Activated CD4-positive, alpha-beta memory T cell treated with anti-CD3 and anti-CD28 coated beads, Interleukin-2, amount 10 ng/mL, durations not matched to agents 7 days and 5 days (primary cell): ENCODE measurements at regions of chr3 and their contacts with region 1.

Region 1: GRCh38 chr3:88003115-88003755 is 55.6 kb downstream of the CGGBP1 start:
- DNase-seq: no peak
- H3K4me3 Mint-ChIP-seq: no peak overlapping the region
- H3K27ac Mint-ChIP-seq: no peak overlapping the region
- H3K4me1 Mint-ChIP-seq: peaks cover 30% of the 10 kb centered on the region
- H3K27me3 Mint-ChIP-seq: peaks cover 5% of the 10 kb centered on the region

Region 2: DNA sequence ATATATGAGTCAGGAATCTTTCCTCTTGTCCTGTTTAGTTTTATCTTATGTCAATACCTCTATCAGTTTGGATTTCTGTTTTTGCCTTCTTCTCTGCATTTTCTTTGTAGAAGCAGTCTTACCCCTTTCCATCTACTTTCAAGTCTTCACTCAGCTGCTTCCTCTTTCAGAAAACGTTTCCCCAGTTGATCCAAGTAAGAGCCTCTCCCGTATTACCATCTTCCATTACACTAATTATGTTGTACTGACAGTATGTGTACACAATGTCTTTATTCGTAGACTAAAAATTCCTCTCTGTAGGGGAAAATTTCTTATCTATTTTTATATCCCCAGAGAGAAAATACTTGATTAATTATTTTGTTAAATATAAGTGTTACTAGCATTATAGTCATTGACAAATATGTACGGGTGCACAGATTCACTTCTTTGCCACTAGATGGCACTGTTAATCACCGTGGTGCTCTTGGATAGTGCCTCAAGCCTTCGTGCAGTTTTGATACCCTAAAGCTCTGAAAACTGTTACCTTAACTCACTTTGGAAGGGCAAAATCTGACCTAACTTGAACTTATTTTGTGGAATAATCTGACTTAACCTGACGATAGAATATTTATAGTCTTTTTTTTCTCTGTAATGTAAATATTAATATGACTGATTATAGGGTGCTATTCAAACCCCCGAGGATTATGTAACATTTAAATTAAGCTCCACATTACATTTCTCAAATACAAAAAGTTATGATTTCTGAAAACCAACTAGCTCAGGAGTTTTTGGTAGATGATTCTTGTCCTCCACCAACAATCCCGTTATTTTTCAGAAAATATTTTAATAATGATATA is 652.7 kb before region 1 on chr3:
- CTCF ChIA-PET with region 1: interaction called, 20 read pairs
- POLR2A ChIA-PET with region 1: no interaction called
- DNase-seq: no peak
- H3K4me3 Mint-ChIP-seq: no peak overlapping the region
- H3K27ac Mint-ChIP-seq: no peak overlapping the region
- H3K4me1 Mint-ChIP-seq: no peaks in the 10 kb centered on the region
- H3K27me3 Mint-ChIP-seq: peaks cover 2% of the 10 kb centered on the region

Region 3: GRCh38 chr3:87771341-87772192 is 231.7 kb before region 1 on chr3:
- CTCF ChIA-PET with region 1: interaction called, 21 read pairs
- POLR2A ChIA-PET with region 1: no interaction called
- DNase-seq: peak; percentile 47
- H3K4me3 Mint-ChIP-seq: no peak overlapping the region
- H3K27ac Mint-ChIP-seq: no peak overlapping the region
- H3K4me1 Mint-ChIP-seq: no peaks in the 10 kb centered on the region
- H3K27me3 Mint-ChIP-seq: peaks cover 18% of the 10 kb centered on the region

Region 4: GRCh38 chr3:87949189-87949878 is 53.9 kb before region 1 on chr3:
- CTCF ChIA-PET with region 1: no interaction called
- POLR2A ChIA-PET with region 1: no interaction called
- DNase-seq: no peak
- H3K4me3 Mint-ChIP-seq: no peak overlapping the region
- H3K27ac Mint-ChIP-seq: no peak overlapping the region
- H3K4me1 Mint-ChIP-seq: no peaks in the 10 kb centered on the region
- H3K27me3 Mint-ChIP-seq: peaks cover 13% of the 10 kb centered on the region

Region 5: GRCh38 chr3:88113311-88114162 is 110.3 kb after region 1 on chr3:
- CTCF ChIA-PET with region 1: interaction called, 17 read pairs
- POLR2A ChIA-PET with region 1: no interaction called
- DNase-seq: peak; percentile 55
- H3K4me3 Mint-ChIP-seq: no peak overlapping the region
- H3K27ac Mint-ChIP-seq: no peak overlapping the region
- H3K4me1 Mint-ChIP-seq: peaks cover 29% of the 10 kb centered on the region
- H3K27me3 Mint-ChIP-seq: no peaks in the 10 kb centered on the region